ENCODE measurements at regions of chr18 and their contacts with region 1.

Region 1: DNA sequence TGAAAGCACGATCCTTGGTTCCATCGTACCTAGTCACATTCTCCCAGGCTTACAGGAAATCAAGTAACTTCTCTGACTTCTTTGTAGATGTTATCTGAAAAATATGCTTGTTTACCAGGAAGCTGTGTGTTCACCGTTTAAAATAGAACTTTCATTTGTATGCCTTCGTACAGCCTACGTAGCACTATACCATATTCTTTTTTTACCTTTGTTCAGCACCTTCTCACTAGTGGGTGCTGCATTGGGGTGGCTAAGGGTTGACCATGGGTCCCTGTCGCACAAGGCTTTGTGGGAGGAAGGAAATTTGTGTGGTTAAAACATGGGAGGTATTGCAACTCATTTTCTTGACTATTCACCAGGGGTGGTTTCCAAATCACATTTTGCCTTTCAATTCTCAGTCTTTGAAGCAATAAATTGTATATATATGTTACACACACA is 16.6 kb downstream of the MALT1 start:
- DNase-seq: peak; percentile 85 to 93 (median 91)
- H3K4me3 ChIP-seq: peak overlapping the region in 1 of 2 donors; percentile 21
- H3K4me3 Mint-ChIP-seq: peak overlapping the region; percentile 73 to 86 (median 81)
- H3K27ac ChIP-seq: peak overlapping the region; percentile 64
- H3K27ac Mint-ChIP-seq: peak overlapping the region; percentile 90 to 98 (median 96)
- H3K4me1 ChIP-seq: peaks cover 84% of the 10 kb centered on the region
- H3K4me1 Mint-ChIP-seq: peaks cover 58 to 77% (median 65%) of the 10 kb centered on the region in 4 donors
- H3K27me3 ChIP-seq: no peaks in the 10 kb centered on the region
- H3K27me3 Mint-ChIP-seq: no peaks in the 10 kb centered on the region

Region 2: DNA sequence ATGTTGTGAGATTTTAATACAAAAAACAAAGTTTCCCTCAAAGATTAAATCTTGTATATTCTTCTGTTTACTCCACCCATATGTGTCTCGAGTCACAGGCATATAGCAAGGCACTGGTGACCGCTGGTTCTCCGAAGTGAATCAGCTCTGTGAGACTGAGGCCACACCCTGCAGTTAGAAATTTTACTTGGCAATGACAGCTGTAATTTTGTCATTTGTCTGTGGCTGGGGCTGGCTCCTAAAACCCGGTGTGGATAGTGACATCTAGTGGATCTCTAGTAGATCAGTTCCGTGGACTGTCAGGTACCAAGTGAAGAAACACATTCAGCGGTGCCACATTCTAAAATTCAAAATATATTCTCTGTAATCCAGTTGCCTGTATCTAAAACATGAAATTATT is 365.9 kb before region 1 on chr18:
- CTCF ChIA-PET with region 1: no interaction called
- POLR2A ChIA-PET with region 1: no interaction called
- intact Hi-C with region 1: no loop called
- DNase-seq: peak; percentile 45 to 72 (median 70)
- H3K4me3 ChIP-seq: no peak overlapping the region
- H3K4me3 Mint-ChIP-seq: peak overlapping the region in 7 of 8 donors; percentile 36 to 88 (median 72)
- H3K27ac ChIP-seq: no peak overlapping the region
- H3K27ac Mint-ChIP-seq: peak overlapping the region; percentile 26 to 92 (median 53)
- H3K4me1 ChIP-seq: peaks cover 11% of the 10 kb centered on the region
- H3K4me1 Mint-ChIP-seq: peaks cover 12 to 21% (median 17%) of the 10 kb centered on the region in 4 donors
- H3K27me3 ChIP-seq: no peaks in the 10 kb centered on the region
- H3K27me3 Mint-ChIP-seq: peaks cover 4% of the 10 kb centered on the region in 2 donors

Region 3: DNA sequence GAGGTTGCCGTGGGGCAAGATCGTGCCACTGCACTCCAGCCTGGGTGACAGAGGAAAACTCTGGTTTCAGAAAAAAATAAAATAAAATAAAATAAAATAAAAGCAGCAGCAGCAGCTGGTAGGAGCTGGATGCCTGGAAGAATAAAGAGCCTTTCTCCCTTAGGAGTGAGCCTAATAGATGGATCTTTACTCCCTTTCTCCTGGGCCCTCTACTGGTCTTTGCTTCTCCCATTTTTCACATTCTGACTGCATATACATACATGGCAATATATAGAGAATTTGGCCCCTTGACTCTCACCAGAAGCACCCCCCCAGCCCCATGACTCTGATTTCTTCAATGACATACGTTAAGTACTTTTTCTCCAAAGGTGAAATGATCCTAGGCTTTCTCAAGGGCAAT is 26.5 kb before region 1 on chr18:
- CTCF ChIA-PET with region 1: interaction called, 6 read pairs
- POLR2A ChIA-PET with region 1: interaction called, 344 read pairs
- intact Hi-C with region 1: no loop called
- DNase-seq: no peak
- H3K4me3 ChIP-seq: no peak overlapping the region
- H3K4me3 Mint-ChIP-seq: no peak overlapping the region
- H3K27ac ChIP-seq: no peak overlapping the region
- H3K27ac Mint-ChIP-seq: peak overlapping the region in 1 of 7 donors; percentile 6
- H3K4me1 ChIP-seq: peaks cover 46% of the 10 kb centered on the region
- H3K4me1 Mint-ChIP-seq: peaks cover 31 to 56% (median 43%) of the 10 kb centered on the region in 4 donors
- H3K27me3 ChIP-seq: no peaks in the 10 kb centered on the region
- H3K27me3 Mint-ChIP-seq: no peaks in the 10 kb centered on the region

Region 4: GRCh38 chr18:58676270-58676669 is 11.6 kb before region 1 on chr18:
- CTCF ChIA-PET with region 1: interaction called, 19 read pairs
- POLR2A ChIA-PET with region 1: interaction called, 344 read pairs
- intact Hi-C with region 1: loop called (anchors 1 kb)
- DNase-seq: no peak
- H3K4me3 ChIP-seq: no peak overlapping the region
- H3K4me3 Mint-ChIP-seq: peak overlapping the region; percentile 56 to 75 (median 66)
- H3K27ac ChIP-seq: no peak overlapping the region
- H3K27ac Mint-ChIP-seq: peak overlapping the region in 6 of 7 donors; percentile 17 to 68 (median 58)
- H3K4me1 ChIP-seq: peaks cover 83% of the 10 kb centered on the region
- H3K4me1 Mint-ChIP-seq: peaks cover 55 to 81% (median 66%) of the 10 kb centered on the region in 4 donors
- H3K27me3 ChIP-seq: no peaks in the 10 kb centered on the region
- H3K27me3 Mint-ChIP-seq: no peaks in the 10 kb centered on the region

Region 5: DNA sequence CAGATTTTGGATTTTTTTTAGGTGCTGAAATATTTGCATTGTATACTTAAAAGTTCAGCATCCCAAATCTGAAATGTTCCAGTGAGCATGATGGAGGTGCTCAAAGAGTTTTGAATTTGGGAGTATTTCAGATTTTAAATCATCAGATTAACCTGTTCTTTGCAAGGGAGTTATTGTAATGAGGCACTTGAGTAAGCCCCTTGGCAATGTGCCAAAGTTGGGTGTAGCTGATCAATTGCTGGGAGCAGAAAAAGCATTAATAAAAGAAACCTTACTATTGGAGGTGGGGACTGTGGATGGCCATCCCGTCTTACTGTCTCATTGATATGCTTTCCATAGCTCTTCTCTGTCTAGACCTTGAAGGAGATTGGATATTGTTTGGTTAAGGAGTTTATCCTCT is 11.7 kb after region 1 on chr18:
- CTCF ChIA-PET with region 1: no interaction called
- POLR2A ChIA-PET with region 1: interaction called, 20 read pairs
- intact Hi-C with region 1: no loop called
- DNase-seq: peak in 1 of 5 donors; percentile 24
- H3K4me3 ChIP-seq: no peak overlapping the region
- H3K4me3 Mint-ChIP-seq: no peak overlapping the region
- H3K27ac ChIP-seq: no peak overlapping the region
- H3K27ac Mint-ChIP-seq: no peak overlapping the region
- H3K4me1 ChIP-seq: peaks cover 56% of the 10 kb centered on the region
- H3K4me1 Mint-ChIP-seq: peaks cover 11 to 41% (median 33%) of the 10 kb centered on the region in 4 donors
- H3K27me3 ChIP-seq: no peaks in the 10 kb centered on the region
- H3K27me3 Mint-ChIP-seq: no peaks in the 10 kb centered on the region

Region 6: DNA sequence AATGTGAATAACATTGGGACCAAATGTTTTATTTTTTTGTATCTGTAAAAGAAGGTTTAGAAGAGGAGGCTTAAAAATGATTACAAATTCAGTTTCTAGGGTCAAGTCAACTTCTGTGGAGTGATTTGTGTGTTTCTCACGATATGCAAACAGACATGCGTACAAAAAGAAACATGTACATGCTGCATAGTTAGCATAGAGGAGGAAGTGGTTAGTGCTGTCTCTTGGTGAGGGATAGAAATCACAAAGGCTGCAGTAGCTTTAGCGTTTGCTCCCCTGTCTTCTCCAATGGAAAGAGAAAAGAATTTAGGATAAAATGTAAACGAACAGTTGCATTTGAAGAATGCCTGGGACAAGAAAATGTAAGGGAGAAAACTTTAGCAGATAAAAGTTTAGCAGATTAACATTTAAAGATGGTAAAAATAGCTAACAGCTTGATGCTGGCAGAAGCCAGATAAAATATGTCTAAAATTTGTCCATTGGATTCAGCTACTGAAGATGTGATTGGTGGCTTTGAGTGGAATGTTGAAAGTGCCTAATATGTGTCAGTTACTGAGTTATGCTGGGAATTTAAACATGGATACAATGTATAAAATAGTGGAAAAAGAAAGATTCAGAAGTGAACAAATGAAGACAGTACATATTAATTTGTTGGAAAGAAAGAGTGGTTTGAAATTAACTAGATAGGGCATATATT is 28.3 kb after region 1 on chr18:
- CTCF ChIA-PET with region 1: interaction called, 9 read pairs
- POLR2A ChIA-PET with region 1: interaction called, 21 read pairs
- intact Hi-C with region 1: loop called (anchors 2 kb)
- DNase-seq: peak in 4 of 5 donors; percentile 33 to 42 (median 37)
- H3K4me3 ChIP-seq: no peak overlapping the region
- H3K4me3 Mint-ChIP-seq: peak overlapping the region; percentile 32 to 88 (median 80)
- H3K27ac ChIP-seq: no peak overlapping the region
- H3K27ac Mint-ChIP-seq: peak overlapping the region; percentile 77 to 90 (median 85)
- H3K4me1 ChIP-seq: peaks cover 44% of the 10 kb centered on the region
- H3K4me1 Mint-ChIP-seq: peaks cover 50 to 68% (median 57%) of the 10 kb centered on the region in 4 donors
- H3K27me3 ChIP-seq: no peaks in the 10 kb centered on the region
- H3K27me3 Mint-ChIP-seq: no peaks in the 10 kb centered on the region

Region 7: GRCh38 chr18:58727776-58728500 is 40.0 kb after region 1 on chr18:
- CTCF ChIA-PET with region 1: no interaction called
- POLR2A ChIA-PET with region 1: no interaction called
- intact Hi-C with region 1: no loop called
- DNase-seq: no peak
- H3K4me3 ChIP-seq: no peak overlapping the region
- H3K4me3 Mint-ChIP-seq: no peak overlapping the region
- H3K27ac ChIP-seq: no peak overlapping the region
- H3K27ac Mint-ChIP-seq: peak overlapping the region in 1 of 7 donors; percentile 19
- H3K4me1 ChIP-seq: no peaks in the 10 kb centered on the region
- H3K4me1 Mint-ChIP-seq: peaks cover 6 to 14% (median 11%) of the 10 kb centered on the region in 4 donors
- H3K27me3 ChIP-seq: no peaks in the 10 kb centered on the region
- H3K27me3 Mint-ChIP-seq: no peaks in the 10 kb centered on the region

Region 8: GRCh38 chr18:59101830-59102414 is 414.0 kb after region 1 on chr18:
- CTCF ChIA-PET with region 1: no interaction called
- POLR2A ChIA-PET with region 1: no interaction called
- intact Hi-C with region 1: no loop called
- DNase-seq: no peak
- H3K4me3 ChIP-seq: no peak overlapping the region
- H3K4me3 Mint-ChIP-seq: no peak overlapping the region
- H3K27ac ChIP-seq: no peak overlapping the region
- H3K27ac Mint-ChIP-seq: no peak overlapping the region
- H3K4me1 ChIP-seq: no peaks in the 10 kb centered on the region
- H3K4me1 Mint-ChIP-seq: no peaks in the 10 kb centered on the region
- H3K27me3 ChIP-seq: peaks cover 6% of the 10 kb centered on the region
- H3K27me3 Mint-ChIP-seq: peaks cover 12 to 34% of the 10 kb centered on the region in 2 donors